Right cardiac atrium (tissue), 5 donors: ENCODE measurements at regions of chr2 and their contacts with region 1.

Region 1: DNA sequence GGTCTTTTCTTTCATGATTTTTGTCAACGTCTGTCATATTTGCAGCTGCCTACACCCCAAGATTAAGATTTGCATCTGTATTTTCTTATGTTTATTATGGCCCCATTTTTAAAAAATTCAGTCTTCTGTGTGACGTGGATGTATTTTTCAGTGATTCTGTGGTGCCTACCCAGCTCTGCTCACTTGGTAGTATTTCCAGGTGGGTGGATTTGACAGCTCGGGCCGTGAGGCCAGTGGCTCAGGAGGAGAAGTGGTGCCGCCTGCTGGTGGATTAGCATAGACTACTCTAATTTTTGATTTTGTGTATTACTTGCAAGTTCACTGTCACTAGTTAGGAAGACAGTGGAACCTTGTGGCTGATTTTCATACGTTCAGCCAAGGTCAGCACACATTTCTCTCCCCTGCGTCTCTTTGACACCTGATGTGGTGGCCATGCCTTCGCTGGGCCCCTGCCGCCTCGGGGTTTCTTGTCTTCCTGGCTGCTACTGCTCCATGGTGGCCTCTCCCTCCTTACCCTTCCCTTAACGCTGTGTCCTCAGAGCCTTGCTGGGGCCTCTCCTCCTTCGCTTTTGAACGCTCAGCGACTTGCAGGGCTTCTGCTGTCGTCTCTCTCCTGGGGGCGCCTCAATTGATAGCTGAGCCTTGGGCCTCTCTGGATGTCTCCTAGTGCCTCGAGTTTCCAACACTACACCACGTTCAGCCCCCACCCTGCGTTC is 89.3 kb downstream of the DGKD start:
- DNase-seq: peak; percentile 79 to 90 (median 88)
- ATAC-seq: peak; percentile 53 to 59
- H3K4me3 ChIP-seq: no peak overlapping the region
- H3K27ac ChIP-seq: no peak overlapping the region
- H3K4me1 ChIP-seq: peaks cover 4% of the 10 kb centered on the region
- H3K27me3 ChIP-seq: no peaks in the 10 kb centered on the region

Region 2: GRCh38 chr2:233288719-233289118 is 154.9 kb before region 1 on chr2:
- intact Hi-C with region 1: loop called in 1 of 4 experiments (anchors 10 kb)
- DNase-seq: no peak
- ATAC-seq: no peak
- H3K4me3 ChIP-seq: no peak overlapping the region
- H3K27ac ChIP-seq: no peak overlapping the region
- H3K4me1 ChIP-seq: no peaks in the 10 kb centered on the region
- H3K27me3 ChIP-seq: no peaks in the 10 kb centered on the region

Region 3: GRCh38 chr2:233353769-233354499 is 89.7 kb before region 1 on chr2 and contains the start of gene DGKD:
- intact Hi-C with region 1: loop called (anchors 5 to 10 kb)
- DNase-seq: peak; percentile 55 to 88 (median 85)
- ATAC-seq: peak; percentile 77 to 86
- H3K4me3 ChIP-seq: peak within 1 kb of the TSS; percentile 99
- H3K27ac ChIP-seq: no peak within 1 kb of the TSS
- H3K4me1 ChIP-seq: peaks cover 5% of the 10 kb centered on the region
- H3K27me3 ChIP-seq: no peaks in the 10 kb centered on the region
- total RNA-seq, gene DGKD: 27.6 to 44.9 (median 38.6) TPM

Region 4: DNA sequence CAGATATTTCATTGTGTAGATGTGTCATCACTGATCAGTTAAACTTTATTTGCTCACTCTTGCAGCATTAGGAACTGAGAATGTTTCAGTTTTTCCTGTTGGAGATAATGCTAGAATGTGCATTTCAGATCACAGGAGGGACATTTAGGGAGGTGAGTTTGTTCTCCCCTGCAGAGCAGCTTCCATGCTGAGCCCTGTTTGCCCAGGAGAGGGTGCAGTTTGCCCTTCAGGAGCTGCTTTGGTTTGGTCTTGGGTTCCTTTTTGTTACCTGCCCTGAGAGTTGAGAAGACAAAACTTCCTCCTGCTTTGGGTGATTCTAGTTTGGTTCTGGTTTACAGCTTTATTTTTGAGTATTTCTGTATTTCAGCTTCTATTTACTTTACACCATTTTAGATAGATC is 39.4 kb before region 1 on chr2:
- intact Hi-C with region 1: loop called in 3 of 4 experiments (anchors 2 to 5 kb)
- DNase-seq: no peak
- ATAC-seq: no peak
- H3K4me3 ChIP-seq: no peak overlapping the region
- H3K27ac ChIP-seq: no peak overlapping the region
- H3K4me1 ChIP-seq: peaks cover 2% of the 10 kb centered on the region
- H3K27me3 ChIP-seq: no peaks in the 10 kb centered on the region

Region 5: DNA sequence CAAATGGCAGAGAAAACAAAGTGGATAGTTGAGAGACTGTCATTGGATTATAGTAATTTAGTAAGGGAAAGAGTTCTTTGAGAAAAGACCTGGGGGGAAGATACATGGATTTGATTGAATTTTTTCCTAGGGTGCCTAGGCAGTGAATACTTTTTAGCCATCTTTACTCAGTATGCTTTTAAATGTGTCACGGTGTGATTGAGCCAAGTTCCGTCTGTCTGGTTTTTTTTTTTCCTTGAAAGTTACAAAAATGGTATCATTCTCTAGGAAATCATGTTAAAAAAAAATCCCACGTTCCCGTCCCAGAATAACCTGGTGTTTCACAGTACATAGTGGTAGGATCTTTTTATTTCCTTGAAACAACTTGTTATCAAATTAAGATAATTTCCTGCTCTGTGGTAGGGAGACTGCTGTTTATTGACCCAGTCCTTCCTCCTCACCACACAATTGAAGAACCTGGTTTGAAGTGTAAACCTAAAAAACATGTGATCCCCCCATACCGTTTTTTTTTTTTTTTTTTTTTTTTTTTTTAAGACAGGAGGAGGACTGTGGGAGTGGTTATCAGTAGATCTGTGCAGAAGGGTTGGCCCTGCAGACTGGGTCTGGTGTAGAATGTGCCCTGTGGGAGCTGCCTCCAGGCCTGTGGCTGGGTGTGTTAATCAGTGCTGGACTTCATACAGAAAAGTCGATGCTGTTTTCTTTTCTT is 34.2 kb before region 1 on chr2:
- intact Hi-C with region 1: loop called in 3 of 4 experiments (anchors 2 to 5 kb)
- DNase-seq: peak; percentile 34 to 74 (median 63)
- ATAC-seq: peak; percentile 82
- H3K4me3 ChIP-seq: no peak overlapping the region
- H3K27ac ChIP-seq: peak overlapping the region; percentile 59
- H3K4me1 ChIP-seq: peaks cover 9% of the 10 kb centered on the region
- H3K27me3 ChIP-seq: no peaks in the 10 kb centered on the region